PC-3 (cell line): ENCODE measurements at regions of chr3 and their contacts with region 1.

Region 1: GRCh38 chr3:94069194-94069813 is 6.4 kb downstream of the NSUN3 start:
- DNase-seq: peak; percentile 58
- ATAC-seq: peak; percentile 24; the same call in 1 of the 2 replicates
- H3K4me3 ChIP-seq: no peak overlapping the region
- H3K27ac ChIP-seq: no peak overlapping the region
- H3K4me1 ChIP-seq: peaks cover 6% of the 10 kb centered on the region
- H3K27me3 ChIP-seq: no peaks in the 10 kb centered on the region
- CTCF ChIP-seq: peak; percentile 83

Region 2: DNA sequence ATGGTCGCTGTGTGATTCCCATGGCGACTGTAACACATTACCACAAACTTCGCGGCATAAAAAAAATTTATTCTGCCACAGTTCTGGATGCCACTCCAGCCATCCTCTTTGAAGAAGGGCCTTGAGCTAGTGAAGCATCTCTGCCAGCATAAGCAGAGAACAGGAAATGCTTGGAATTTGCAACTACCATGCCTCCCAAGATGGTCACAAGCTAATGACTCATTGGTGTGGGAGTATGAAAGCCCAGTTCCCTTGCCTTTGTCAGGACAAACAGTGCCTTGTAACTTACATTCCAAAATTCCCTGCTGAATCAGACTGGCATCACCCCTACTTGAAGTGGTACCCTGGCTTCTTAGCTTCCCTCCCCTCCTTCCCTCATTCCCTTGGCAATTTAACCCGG is 225.3 kb before region 1 on chr3:
- CTCF ChIA-PET with region 1: interaction called, 4 read pairs
- POLR2A ChIA-PET with region 1: no interaction called
- intact Hi-C with region 1: loop called (anchors 5 kb)
- DNase-seq: peak; percentile 88
- ATAC-seq: peak; percentile 72
- H3K4me3 ChIP-seq: no peak overlapping the region
- H3K27ac ChIP-seq: no peak overlapping the region
- H3K4me1 ChIP-seq: peaks cover 16% of the 10 kb centered on the region; the same call in 1 of the 2 replicates
- H3K27me3 ChIP-seq: no peaks in the 10 kb centered on the region
- CTCF ChIP-seq: no peak

Region 3: DNA sequence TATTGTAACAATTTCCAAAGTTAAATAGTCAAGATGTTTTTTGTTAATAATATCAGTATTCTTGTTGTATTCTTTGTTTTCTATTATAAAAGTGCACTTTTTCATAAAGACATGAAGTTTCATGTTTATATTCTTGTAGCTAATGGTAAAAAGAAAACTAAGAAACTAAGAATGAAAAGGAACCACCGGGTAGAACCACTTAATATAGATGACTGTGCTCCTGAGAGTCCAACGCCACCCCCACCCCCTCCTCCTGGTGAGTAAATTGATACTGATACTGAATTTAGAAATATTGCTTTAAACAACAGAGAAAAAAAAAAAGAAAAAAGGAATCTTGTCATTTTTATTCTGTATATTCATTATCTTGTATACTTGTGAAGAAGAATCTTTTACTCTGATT is 20.0 kb before region 1 on chr3:
- CTCF ChIA-PET with region 1: interaction called, 3 read pairs
- POLR2A ChIA-PET with region 1: no interaction called
- intact Hi-C with region 1: loop called (anchors 2 kb)
- DNase-seq: no peak
- ATAC-seq: no peak
- H3K4me3 ChIP-seq: no peak overlapping the region
- H3K27ac ChIP-seq: no peak overlapping the region
- H3K4me1 ChIP-seq: no peaks in the 10 kb centered on the region
- H3K27me3 ChIP-seq: no peaks in the 10 kb centered on the region
- CTCF ChIP-seq: no peak

Region 4: GRCh38 chr3:94137377-94137776 is 68.1 kb after region 1 on chr3:
- CTCF ChIA-PET with region 1: no interaction called
- POLR2A ChIA-PET with region 1: no interaction called
- intact Hi-C with region 1: no loop called
- DNase-seq: no peak
- ATAC-seq: no peak
- H3K4me3 ChIP-seq: no peak overlapping the region
- H3K27ac ChIP-seq: no peak overlapping the region
- H3K4me1 ChIP-seq: no peaks in the 10 kb centered on the region
- H3K27me3 ChIP-seq: no peaks in the 10 kb centered on the region
- CTCF ChIP-seq: no peak

Region 5: DNA sequence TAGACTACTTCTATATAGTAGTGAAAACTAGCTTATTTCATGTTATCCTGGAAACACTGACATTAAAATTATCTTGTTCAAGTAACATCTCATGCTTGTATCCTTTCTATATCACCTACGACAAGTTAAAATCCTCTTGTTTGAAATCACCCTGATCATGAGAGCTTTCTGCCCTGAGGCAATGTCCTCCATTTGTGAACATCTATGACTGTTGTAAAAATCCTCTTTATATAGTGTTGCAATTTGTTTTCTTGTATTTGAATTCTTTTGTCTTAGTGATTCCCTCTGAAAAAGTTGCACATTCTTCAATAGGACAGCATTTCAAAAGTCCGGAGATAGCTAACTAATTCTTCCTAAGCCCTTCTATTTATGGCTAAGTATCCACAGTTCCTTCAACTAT is 473.9 kb after region 1 on chr3:
- CTCF ChIA-PET with region 1: no interaction called
- POLR2A ChIA-PET with region 1: interaction called, 11 read pairs
- intact Hi-C with region 1: no loop called
- DNase-seq: no peak
- ATAC-seq: no peak
- H3K4me3 ChIP-seq: no peak overlapping the region
- H3K27ac ChIP-seq: no peak overlapping the region
- H3K4me1 ChIP-seq: peaks cover 5% of the 10 kb centered on the region; the same call in 1 of the 2 replicates
- H3K27me3 ChIP-seq: no peaks in the 10 kb centered on the region
- CTCF ChIP-seq: no peak